Esophagus squamous epithelium (tissue), 5 donors: ENCODE measurements at regions of chr21 and their contacts with region 1.

Region 1: DNA sequence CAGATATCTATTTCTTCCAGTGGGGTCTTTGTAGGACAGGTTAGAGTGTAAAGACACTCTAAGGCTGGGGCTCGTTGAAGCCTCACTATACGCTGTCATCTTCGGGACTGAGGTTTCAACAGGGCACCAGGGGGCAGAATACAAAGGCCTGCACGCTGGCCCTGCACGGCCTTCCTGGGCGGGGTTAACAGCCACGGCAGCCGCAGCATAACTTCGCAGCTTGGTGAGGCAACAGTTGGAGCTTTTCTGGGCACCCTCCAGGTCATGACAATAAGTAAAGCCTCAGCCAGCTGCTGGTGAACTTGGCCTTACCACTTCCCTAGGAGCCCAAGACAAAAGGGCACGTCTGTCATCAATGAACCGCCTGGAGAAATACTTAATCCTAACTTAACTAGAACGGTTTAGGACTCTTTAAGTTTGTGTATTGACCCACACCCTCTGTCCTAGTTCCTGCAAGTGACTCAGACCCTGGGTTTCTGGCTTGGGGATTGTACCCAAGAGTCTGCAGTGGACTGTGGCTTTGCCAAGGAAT is 2.3 kb upstream of the RUNX1 start:
- DNase-seq: peak; percentile 42
- H3K4me3 ChIP-seq: no peak overlapping the region
- H3K27ac ChIP-seq: peak overlapping the region; percentile 21 to 81 (median 36)
- H3K4me1 ChIP-seq: peaks cover 19 to 51% (median 27%) of the 10 kb centered on the region in 3 donors
- H3K27me3 ChIP-seq: no peaks in the 10 kb centered on the region
- CTCF ChIP-seq: peak; percentile 40 to 78 (median 64)
- POLR2A ChIP-seq: peak in 1 of 4 donors; percentile 13

Region 2: GRCh38 chr21:34888569-34889319 is 162.6 kb before region 1 on chr21:
- intact Hi-C with region 1: loop called (anchors 10 kb)
- DNase-seq: peak; percentile 58
- H3K4me3 ChIP-seq: peak overlapping the region; percentile 67 to 82 (median 73)
- H3K27ac ChIP-seq: peak overlapping the region; percentile 95 to 97 (median 97)
- H3K4me1 ChIP-seq: peaks cover 3 to 70% (median 14%) of the 10 kb centered on the region in 3 donors
- H3K27me3 ChIP-seq: peaks cover 0 to 75% (median 4%) of the 10 kb centered on the region in 4 donors
- CTCF ChIP-seq: peak in 2 of 6 experiments; percentile 8 to 15
- POLR2A ChIP-seq: peak in 3 of 4 donors; percentile 76 to 98 (median 96)

Region 3: DNA sequence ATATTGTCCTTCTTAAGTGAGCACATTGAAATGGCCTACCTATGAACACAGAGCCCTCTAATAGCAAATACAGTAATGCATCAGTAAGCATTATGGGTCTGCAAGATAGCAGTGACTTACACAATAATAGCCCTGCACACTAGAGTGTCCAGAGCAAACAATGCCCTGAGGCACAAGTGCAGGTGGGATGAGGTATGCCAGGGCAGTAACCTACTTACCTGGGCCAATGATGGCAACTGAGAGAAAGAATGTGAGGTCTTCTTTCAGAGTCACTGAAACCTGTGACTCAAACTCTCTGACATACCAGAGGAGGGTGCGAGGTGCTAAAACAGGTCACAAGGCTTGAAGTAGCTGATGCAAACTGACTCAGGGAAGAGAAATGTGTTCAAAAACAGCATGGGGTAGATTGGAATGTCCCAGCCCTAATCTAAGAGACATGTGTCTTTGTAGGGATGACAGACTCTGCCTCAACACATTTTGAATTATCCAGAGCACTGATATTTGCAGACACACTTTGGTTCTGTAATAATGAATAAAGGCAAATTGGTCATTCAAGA is 166.2 kb after region 1 on chr21:
- intact Hi-C with region 1: no loop called
- DNase-seq: no peak
- H3K4me3 ChIP-seq: no peak overlapping the region
- H3K27ac ChIP-seq: peak overlapping the region in 1 of 4 donors; percentile 23
- H3K4me1 ChIP-seq: peaks cover 0 to 32% (median 10%) of the 10 kb centered on the region in 3 donors
- H3K27me3 ChIP-seq: no peaks in the 10 kb centered on the region
- CTCF ChIP-seq: no peak
- POLR2A ChIP-seq: no peak

Region 4: GRCh38 chr21:35390013-35390776 is 338.8 kb after region 1 on chr21:
- intact Hi-C with region 1: loop called (anchors 10 kb)
- DNase-seq: no peak
- H3K4me3 ChIP-seq: no peak overlapping the region
- H3K27ac ChIP-seq: peak overlapping the region in 2 of 4 donors; percentile 15 to 30
- H3K4me1 ChIP-seq: peaks cover 0 to 32% (median 0%) of the 10 kb centered on the region in 3 donors
- H3K27me3 ChIP-seq: no peaks in the 10 kb centered on the region
- CTCF ChIP-seq: no peak
- POLR2A ChIP-seq: no peak